KBM-7 (cell line): ENCODE measurements at regions of chr6 and their contacts with region 1.

Region 1: GRCh38 chr6:56570413-56571359 is 72.0 kb downstream of the DST start:
- DNase-seq: peak; percentile 42

Region 2: GRCh38 chr6:56359201-56359899 is 211.3 kb before region 1 on chr6:
- in situ Hi-C with region 1: loop called (anchors 25 kb)
- DNase-seq: peak; percentile 87